ENCODE measurements at regions of chr1 and their contacts with region 1.

Region 1: DNA sequence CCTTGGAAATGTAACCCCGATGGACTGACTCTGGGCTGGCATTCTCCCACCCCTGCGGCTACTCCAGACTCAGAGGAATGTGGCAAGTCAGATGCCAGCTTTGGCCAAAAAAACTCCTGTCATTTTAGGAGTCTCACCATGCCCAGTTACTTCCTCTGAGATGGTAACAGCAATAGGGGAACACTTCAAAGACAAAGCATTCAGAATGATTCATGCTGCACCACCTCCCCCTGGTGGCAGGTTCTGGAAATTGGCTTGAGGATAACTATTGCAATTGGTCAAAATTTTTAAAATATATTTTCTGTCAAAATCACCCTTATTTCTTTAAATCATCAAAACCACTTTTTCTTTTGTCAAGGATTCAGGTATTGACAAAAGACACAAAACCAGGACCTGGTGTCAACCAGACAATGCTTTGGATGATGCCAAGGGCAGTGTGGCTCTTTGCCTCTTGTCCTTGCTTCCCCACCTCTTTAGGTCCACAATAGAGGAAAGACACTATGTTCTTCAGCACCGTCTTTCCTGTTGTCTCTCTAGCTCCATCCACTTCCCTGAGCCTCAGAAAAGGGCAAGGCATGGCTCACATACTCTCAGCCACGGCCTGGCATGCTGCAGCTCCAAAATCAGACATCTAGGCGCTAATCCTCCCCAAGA is 9.9 kb upstream of the CDCA8 start:
- DNase-seq: peak; percentile 40 to 44
- ATAC-seq: peak; percentile 59 to 87; a peak in 5 of 6 replicates
- H3K4me3 ChIP-seq: no peak overlapping the region
- H3K27ac ChIP-seq: no peak overlapping the region
- H3K4me1 ChIP-seq: no peaks in the 10 kb centered on the region
- CTCF ChIP-seq: peak; percentile 76
- EP300 ChIP-seq: no peak
- POLR2A ChIP-seq: no peak
- RAD21 ChIP-seq: peak; percentile 75 to 79

Region 2: DNA sequence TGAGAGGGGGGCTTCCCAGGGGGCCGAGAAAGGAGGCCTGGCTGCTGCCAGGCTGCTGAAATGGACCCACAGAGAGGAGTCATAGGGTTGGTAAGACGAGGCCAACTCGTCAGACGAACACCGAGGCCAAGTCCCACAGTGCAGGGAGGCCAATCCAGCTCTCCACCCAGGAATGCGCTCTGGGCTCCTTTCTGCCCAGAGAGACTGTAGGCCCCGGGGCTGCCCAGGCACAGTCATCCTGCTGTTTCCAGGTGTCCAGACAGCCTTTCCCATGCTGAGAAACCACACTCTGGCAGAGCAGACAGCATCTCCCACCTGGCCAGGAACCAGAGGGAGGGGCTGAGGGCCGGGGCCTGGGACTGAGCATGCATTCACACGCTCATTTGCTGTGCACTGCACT is 21.1 kb before region 1 on chr1:
- CTCF ChIA-PET with region 1: interaction called, 20 read pairs
- POLR2A ChIA-PET with region 1: no interaction called
- DNase-seq: no peak
- ATAC-seq: no peak
- H3K4me3 ChIP-seq: no peak overlapping the region
- H3K27ac ChIP-seq: no peak overlapping the region
- H3K4me1 ChIP-seq: no peaks in the 10 kb centered on the region
- CTCF ChIP-seq: no peak
- EP300 ChIP-seq: no peak
- POLR2A ChIP-seq: no peak
- RAD21 ChIP-seq: no peak

Region 3: DNA sequence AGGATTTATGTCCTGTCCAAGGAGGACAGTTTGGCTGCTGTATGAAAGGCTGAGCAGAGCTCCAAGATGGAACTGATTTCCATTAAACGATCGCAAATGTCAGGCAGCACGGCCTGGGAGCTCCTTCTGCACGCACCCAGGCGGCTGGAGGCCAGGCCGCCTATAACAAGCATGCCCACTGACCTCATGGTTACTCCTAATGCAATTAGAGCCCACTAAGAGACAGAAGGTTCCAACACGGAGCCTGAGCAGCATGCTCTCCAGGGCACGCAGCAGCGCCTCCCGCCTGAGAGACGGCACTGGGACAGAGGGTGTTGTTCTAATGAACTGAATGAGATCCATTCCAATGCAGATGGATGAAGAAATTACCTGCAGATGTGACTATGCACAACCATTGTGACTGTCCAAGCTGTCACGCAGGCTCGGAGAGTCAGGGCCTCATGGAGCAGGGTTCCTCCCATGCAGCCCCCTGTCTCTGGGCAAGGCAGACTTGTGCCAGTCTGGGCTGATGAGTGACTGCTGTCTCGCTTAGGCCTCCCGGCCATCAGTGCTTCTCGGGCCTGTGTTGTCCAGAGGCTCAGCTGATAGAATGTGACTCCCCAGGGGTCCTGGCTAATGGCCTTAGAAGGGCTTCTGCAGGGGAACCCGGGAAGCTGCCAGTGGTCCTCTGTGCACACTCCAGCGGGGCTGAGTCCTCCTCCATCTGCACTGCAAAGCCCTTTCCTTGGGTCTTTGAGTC is 15.3 kb before region 1 on chr1:
- CTCF ChIA-PET with region 1: interaction called, 20 read pairs
- POLR2A ChIA-PET with region 1: no interaction called
- DNase-seq: no peak
- ATAC-seq: no peak
- H3K4me3 ChIP-seq: no peak overlapping the region
- H3K27ac ChIP-seq: no peak overlapping the region
- H3K4me1 ChIP-seq: no peaks in the 10 kb centered on the region
- CTCF ChIP-seq: no peak
- EP300 ChIP-seq: no peak
- POLR2A ChIP-seq: no peak
- RAD21 ChIP-seq: no peak

Region 4: DNA sequence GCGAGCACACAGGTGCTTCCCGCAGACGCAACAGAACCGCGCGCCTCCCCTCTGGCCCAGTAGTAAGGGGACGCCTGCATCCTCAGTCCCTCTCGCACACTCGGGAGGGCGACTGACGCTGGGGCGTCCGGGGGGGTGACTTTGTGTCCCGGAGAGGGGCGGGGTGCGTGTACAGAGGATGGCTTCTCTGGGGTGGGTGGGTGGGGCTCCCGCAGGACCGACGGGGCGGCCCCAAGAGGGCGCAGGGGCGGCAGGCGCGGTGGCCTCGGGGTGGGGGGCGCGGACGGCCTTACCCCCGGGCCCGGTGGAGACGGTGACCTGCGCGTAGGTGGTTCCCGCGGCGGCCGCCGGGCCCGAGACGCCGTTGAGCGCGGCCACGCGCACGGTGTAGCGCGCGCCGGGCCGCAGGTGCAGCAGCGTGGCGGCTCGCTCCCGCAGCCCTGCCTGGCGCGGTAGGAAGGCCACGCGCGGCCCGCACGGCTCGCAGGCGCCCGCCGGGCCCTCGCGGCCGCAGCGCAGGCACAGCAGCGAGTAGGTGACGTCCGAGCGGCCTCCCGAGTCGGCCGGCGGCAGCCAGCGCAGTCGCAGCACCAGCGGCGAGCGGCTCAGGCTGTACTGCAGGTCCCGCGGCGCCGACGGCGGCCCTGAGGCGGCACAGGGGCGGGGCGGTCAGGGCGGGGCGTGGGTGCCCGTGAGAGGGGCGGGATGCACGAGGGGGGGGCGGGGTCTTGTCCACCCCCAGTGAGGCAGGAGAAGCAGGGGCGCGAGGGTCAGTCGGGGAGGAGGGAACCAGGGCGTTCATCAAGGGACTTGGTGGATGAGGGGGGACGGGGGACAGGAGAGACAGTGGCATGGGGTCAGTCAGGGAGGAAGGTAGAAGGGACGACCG is 70.4 kb after region 1 on chr1:
- CTCF ChIA-PET with region 1: no interaction called
- POLR2A ChIA-PET with region 1: no interaction called
- DNase-seq: peak in 1 of 2 experiments; percentile 53
- ATAC-seq: peak; percentile 82 to 86
- H3K4me3 ChIP-seq: peak overlapping the region; percentile 66
- H3K27ac ChIP-seq: peak overlapping the region; percentile 64 to 82; a peak in 5 of 6 replicates
- H3K4me1 ChIP-seq: no peaks in the 10 kb centered on the region
- CTCF ChIP-seq: no peak
- EP300 ChIP-seq: no peak
- POLR2A ChIP-seq: peak; percentile 43
- RAD21 ChIP-seq: no peak